GM12878 (cell line): ENCODE measurements at regions of chr1 and their contacts with region 1.

Region 1: DNA sequence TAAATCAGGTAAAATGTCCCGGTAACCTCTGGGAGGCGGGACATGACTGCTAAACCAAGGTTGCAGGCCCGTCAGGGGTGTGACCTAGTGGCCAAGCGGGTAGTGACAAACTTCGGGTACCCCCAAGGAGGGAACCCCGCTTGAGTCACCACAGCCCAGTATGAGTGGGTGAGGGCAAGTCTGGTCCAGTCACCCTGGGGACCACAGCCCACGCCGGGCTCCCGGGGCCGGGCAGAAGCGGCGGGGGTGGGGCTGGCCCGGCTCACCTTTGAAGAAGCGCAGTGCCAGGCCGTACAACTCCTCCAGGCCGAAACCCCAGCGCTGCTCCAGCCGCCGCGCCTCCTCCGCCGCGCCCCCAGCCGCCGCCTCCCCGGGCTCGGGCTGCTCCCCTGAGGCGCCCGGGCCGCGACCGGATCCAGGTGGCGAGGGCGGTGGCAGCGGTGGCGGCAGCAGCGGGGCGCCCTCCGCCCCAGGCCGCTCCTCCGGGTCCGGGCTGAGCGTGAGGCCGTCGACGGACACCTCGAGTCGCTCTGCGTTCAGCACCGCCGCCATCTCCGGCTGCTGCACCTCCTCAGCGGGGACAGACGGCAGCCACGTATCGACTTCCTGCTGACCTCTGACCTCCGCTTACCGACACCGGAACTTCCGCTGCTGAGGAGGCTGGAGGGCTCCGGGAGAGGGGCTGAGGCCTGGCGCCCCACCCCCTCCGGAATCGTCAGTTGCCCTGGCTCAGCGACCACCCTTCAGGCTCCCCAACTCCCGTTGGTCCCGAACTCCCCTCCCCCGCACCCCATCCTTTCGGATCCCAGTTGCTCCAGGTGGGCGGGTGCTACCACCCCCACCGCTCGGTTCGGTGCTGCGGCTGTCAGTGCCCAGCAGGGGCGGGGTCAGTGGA is at the start of gene ACBD3:
- DNase-seq: peak; percentile 41
- ATAC-seq: peak; percentile 92
- H3K4me3 ChIP-seq: peak within 1 kb of the TSS; percentile 94
- H3K27ac ChIP-seq: peak within 1 kb of the TSS; percentile 88
- H3K4me1 ChIP-seq: peaks cover 7% of the 10 kb centered on the region; the same call in 1 of the 2 replicates
- H3K27me3 ChIP-seq: no peaks in the 10 kb centered on the region
- CTCF ChIP-seq: no peak; a peak in 1 of 6 replicates
- EP300 ChIP-seq: no peak
- POLR2A ChIP-seq: peak; percentile 100
- RAD21 ChIP-seq: no peak
- polyA plus RNA-seq, gene ACBD3: 7.5 to 8.9 TPM

Region 2: GRCh38 chr1:226149806-226150205 is 36.6 kb before region 1 on chr1:
- CTCF ChIA-PET with region 1: interaction called, 10 read pairs
- POLR2A ChIA-PET with region 1: interaction called, 5 read pairs
- RAD21 ChIA-PET with region 1: no interaction called
- SMC1A ChIA-PET with region 1: interaction called, 3 read pairs
- in situ Hi-C with region 1: no loop called
- intact Hi-C with region 1: no loop called
- DNase-seq: no peak
- ATAC-seq: peak; percentile 43; the same call in 1 of the 3 replicates
- H3K4me3 ChIP-seq: no peak overlapping the region
- H3K27ac ChIP-seq: no peak overlapping the region
- H3K4me1 ChIP-seq: no peaks in the 10 kb centered on the region
- H3K27me3 ChIP-seq: no peaks in the 10 kb centered on the region
- CTCF ChIP-seq: no peak
- EP300 ChIP-seq: no peak
- POLR2A ChIP-seq: no peak
- RAD21 ChIP-seq: no peak

Region 3: DNA sequence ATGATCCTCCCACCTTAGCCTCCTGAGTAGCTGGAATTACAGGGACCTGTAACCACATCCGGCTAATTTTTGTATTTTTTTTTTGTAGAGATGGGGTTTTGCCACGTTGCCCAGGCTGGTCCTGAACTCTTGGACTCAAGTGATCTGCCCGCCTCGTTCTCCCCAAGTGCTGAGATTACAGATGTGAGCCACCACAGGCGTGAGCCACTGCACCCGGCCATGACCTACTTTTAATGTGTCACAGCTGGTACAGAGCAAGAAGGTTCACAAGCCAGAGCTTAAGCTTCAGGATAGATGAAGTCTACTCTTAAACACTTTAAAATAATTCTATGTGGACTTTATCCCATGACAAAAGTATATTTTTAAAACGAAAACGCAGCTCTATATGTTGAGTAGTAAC is 23.5 kb before region 1 on chr1:
- CTCF ChIA-PET with region 1: interaction called, 15 read pairs
- POLR2A ChIA-PET with region 1: no interaction called
- RAD21 ChIA-PET with region 1: no interaction called
- SMC1A ChIA-PET with region 1: interaction called, 9 read pairs
- in situ Hi-C with region 1: no loop called
- intact Hi-C with region 1: no loop called
- DNase-seq: no peak
- ATAC-seq: no peak
- H3K4me3 ChIP-seq: no peak overlapping the region
- H3K27ac ChIP-seq: no peak overlapping the region
- H3K4me1 ChIP-seq: peaks cover 12% of the 10 kb centered on the region
- H3K27me3 ChIP-seq: no peaks in the 10 kb centered on the region
- CTCF ChIP-seq: no peak
- EP300 ChIP-seq: no peak
- POLR2A ChIP-seq: no peak
- RAD21 ChIP-seq: no peak

Region 4: GRCh38 chr1:226201029-226201593 is 14.7 kb after region 1 on chr1:
- CTCF ChIA-PET with region 1: interaction called, 25 read pairs
- POLR2A ChIA-PET with region 1: no interaction called
- RAD21 ChIA-PET with region 1: interaction called, 5 read pairs
- SMC1A ChIA-PET with region 1: interaction called, 16 read pairs
- in situ Hi-C with region 1: no loop called
- intact Hi-C with region 1: no loop called
- DNase-seq: no peak
- ATAC-seq: peak; percentile 80
- H3K4me3 ChIP-seq: no peak overlapping the region
- H3K27ac ChIP-seq: no peak overlapping the region
- H3K4me1 ChIP-seq: peaks cover 3% of the 10 kb centered on the region; the same call in 1 of the 2 replicates
- H3K27me3 ChIP-seq: no peaks in the 10 kb centered on the region; a peak in 1 of 4 replicates
- CTCF ChIP-seq: peak; percentile 59 to 67 (median 60)
- EP300 ChIP-seq: no peak
- POLR2A ChIP-seq: no peak
- RAD21 ChIP-seq: peak; percentile 72